Calu3 (cell line): ENCODE measurements at regions of chr10 and their contacts with region 1.

Region 1: GRCh38 chr10:118241229-118242137 is 100.6 kb downstream of the FAM204A start:
- DNase-seq: peak; percentile 67
- H3K4me3 Mint-ChIP-seq: no peak overlapping the region
- H3K27ac Mint-ChIP-seq: no peak overlapping the region
- H3K4me1 Mint-ChIP-seq: no peaks in the 10 kb centered on the region
- H3K27me3 Mint-ChIP-seq: peaks cover 52% of the 10 kb centered on the region
- CTCF ChIP-seq: peak; percentile 77

Region 2: DNA sequence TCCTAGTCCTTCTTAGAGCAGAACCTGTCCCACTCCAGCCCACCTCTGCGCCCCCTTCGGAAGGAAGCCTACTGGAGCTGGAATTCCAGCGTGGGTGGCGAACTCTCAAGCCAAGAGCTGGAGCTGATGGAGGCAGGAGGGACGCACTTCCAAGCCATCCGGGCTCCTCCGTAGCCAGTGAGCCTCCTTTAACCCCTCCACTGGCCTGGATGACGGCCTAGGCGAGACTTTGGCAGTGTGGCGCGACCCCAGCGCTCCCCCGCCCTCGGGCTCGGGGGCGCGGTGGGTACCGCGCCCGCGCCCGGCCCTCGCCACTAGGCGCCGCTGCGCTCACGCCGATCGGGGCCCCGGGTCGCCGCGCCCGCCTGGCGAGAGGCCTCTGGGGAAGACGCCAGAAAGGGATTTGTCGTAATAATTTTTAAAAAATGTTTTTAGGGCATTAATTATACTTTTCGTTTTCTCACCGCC is 704.0 kb before region 1 on chr10:
- CTCF ChIA-PET with region 1: no interaction called
- intact Hi-C with region 1: loop called (anchors 5 kb)
- DNase-seq: peak; percentile 28
- H3K4me3 Mint-ChIP-seq: no peak overlapping the region
- H3K27ac Mint-ChIP-seq: no peak overlapping the region
- H3K4me1 Mint-ChIP-seq: no peaks in the 10 kb centered on the region
- H3K27me3 Mint-ChIP-seq: peaks cover 55% of the 10 kb centered on the region
- CTCF ChIP-seq: peak; percentile 59

Region 3: DNA sequence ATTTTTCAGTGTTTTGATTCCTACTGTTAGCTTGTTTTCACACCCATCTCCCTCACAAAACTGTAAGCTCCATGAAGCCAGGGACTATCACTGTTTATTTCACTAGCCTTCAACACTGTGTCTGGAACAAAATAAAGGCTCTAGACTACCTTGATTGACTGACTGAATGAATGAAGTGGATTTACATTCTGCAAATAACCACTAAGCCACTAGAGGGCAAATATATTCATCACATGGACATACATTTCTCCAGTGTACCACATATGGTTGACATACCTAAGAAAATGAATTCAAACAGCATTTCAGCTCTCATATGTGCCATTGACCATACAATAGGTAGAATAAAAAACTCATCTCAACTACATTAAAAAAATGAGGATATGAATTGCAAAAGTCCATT is 380.7 kb before region 1 on chr10:
- CTCF ChIA-PET with region 1: no interaction called
- intact Hi-C with region 1: loop called (anchors 5 kb)
- DNase-seq: no peak
- H3K4me3 Mint-ChIP-seq: no peak overlapping the region
- H3K27ac Mint-ChIP-seq: no peak overlapping the region
- H3K4me1 Mint-ChIP-seq: no peaks in the 10 kb centered on the region
- H3K27me3 Mint-ChIP-seq: no peaks in the 10 kb centered on the region
- CTCF ChIP-seq: no peak

Region 4: DNA sequence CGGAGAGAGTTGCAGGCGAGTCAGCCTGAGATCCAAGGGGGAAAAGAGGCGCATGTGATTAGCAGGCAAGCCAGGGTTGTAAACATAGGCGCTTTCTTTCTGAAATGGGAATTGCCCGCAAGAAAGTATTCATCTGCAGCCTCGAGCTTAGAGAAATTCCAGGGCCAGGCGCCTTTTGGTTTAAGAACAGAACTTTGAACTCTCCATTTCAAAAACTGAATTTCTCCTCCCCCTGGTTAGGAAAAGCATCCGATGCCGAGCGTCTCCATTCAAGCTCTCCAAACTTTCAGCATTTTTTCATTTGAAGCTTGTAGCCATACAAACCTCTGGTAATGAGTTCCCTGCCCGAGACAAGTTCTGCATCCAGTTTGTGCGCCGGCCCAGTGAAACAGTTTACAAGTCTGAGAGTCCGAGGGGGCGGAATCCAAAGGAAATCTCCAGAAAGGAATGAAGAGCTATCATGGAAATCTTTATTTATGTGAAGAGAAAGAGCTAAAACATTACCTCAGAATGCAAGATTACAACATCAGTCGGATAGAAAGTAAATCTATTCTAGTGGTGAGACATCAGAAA is 30.8 kb after region 1 on chr10:
- CTCF ChIA-PET with region 1: no interaction called
- intact Hi-C with region 1: no loop called
- DNase-seq: no peak
- H3K4me3 Mint-ChIP-seq: no peak overlapping the region
- H3K27ac Mint-ChIP-seq: no peak overlapping the region
- H3K4me1 Mint-ChIP-seq: no peaks in the 10 kb centered on the region
- H3K27me3 Mint-ChIP-seq: no peaks in the 10 kb centered on the region
- CTCF ChIP-seq: no peak